Pancreas (tissue), 10 donors: ENCODE measurements at regions of chr7 and their contacts with region 1.

Region 1: GRCh38 chr7:135281363-135281949 is 47.8 kb downstream of the STRA8 start:
- DNase-seq: peak in 5 of 6 donors; percentile 66 to 82 (median 74)
- ATAC-seq: peak; percentile 98 to 100 (median 100)
- H3K4me3 ChIP-seq: no peak overlapping the region
- H3K27ac ChIP-seq: no peak overlapping the region
- H3K4me1 ChIP-seq: no peaks in the 10 kb centered on the region
- H3K27me3 ChIP-seq: no peaks in the 10 kb centered on the region
- CTCF ChIP-seq: peak; percentile 67 to 89 (median 82)

Region 2: GRCh38 chr7:135335628-135336139 is 54.2 kb after region 1 on chr7:
- intact Hi-C with region 1: loop called in 2 of 3 experiments (anchors 5 kb)
- DNase-seq: peak; percentile 68 to 87 (median 74)
- ATAC-seq: peak; percentile 96 to 99 (median 98)
- H3K4me3 ChIP-seq: no peak overlapping the region
- H3K27ac ChIP-seq: no peak overlapping the region
- H3K4me1 ChIP-seq: no peaks in the 10 kb centered on the region
- H3K27me3 ChIP-seq: no peaks in the 10 kb centered on the region
- CTCF ChIP-seq: peak in 3 of 4 donors; percentile 37 to 49 (median 45)

Region 3: DNA sequence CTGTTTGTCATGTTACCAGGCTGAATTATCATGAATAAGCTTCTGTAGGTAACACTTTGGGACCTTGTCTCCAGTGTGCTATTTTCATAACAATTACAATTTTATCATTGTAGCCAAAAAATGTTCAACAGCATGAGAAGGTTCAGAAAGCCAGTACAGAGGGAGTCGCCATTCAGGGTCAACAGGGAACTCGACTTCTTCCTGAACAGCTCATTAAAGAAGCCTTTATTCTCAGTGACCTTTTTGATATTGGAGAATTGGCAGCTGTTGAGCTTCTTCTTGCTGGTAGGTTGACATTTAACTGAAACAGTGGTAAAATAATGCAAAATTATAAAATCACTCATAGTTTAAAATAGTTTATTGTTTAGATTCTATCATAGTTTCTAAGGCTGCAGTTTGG is 292.1 kb after region 1 on chr7:
- intact Hi-C with region 1: no loop called
- DNase-seq: no peak
- ATAC-seq: no peak
- H3K4me3 ChIP-seq: no peak overlapping the region
- H3K27ac ChIP-seq: no peak overlapping the region
- H3K4me1 ChIP-seq: no peaks in the 10 kb centered on the region
- H3K27me3 ChIP-seq: no peaks in the 10 kb centered on the region
- CTCF ChIP-seq: no peak

Region 4: DNA sequence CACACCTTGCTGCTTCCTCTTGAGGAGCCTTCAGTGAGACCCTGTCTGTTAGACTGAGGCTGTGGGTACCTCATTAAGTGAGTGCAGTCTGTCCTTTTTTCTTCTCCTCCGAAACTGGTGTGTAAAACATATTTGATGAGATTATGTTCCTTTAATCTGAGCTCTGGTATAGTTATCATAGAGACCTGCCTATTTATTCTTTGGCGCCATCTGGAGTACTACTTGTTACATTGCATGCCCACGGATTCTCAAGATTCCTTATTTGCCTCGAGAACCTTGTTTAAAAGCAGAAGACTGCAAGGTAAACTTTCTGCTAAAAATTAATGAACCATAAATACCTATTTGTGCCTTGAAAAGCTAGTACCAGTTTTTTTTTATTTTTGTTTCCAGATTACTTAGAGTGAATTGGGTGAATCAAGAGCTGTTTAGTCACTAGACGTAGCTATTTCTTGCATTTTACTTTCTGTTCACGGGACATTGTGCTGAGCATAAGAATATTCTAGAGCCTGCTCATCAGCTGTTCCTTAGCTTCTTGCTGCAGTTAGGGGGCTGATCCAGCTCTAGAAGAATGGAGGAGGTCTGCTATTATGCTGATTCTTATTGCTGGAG is 363.9 kb after region 1 on chr7:
- intact Hi-C with region 1: loop called in 2 of 3 experiments (anchors 10 kb)
- DNase-seq: peak in 1 of 6 donors; percentile 21
- ATAC-seq: peak in 3 of 4 donors; percentile 85 to 88 (median 86)
- H3K4me3 ChIP-seq: no peak overlapping the region
- H3K27ac ChIP-seq: no peak overlapping the region
- H3K4me1 ChIP-seq: no peaks in the 10 kb centered on the region
- H3K27me3 ChIP-seq: no peaks in the 10 kb centered on the region
- CTCF ChIP-seq: peak; percentile 42 to 61 (median 53)